ENCODE measurements at regions of chr6 and their contacts with region 1.

Region 1: GRCh38 chr6:157625764-157626163 is 197.3 kb upstream of the SNX9 start:
- DNase-seq: no peak
- H3K4me3 ChIP-seq: no peak overlapping the region
- H3K27ac ChIP-seq: no peak overlapping the region
- H3K4me1 ChIP-seq: peaks cover 0 to 6% (median 0%) of the 10 kb centered on the region in 4 experiments; a peak in 1 of 7 replicates
- H3K27me3 ChIP-seq: no peaks in the 10 kb centered on the region
- CTCF ChIP-seq: no peak
- EP300 ChIP-seq: no peak
- POLR2A ChIP-seq: no peak
- RAD21 ChIP-seq: no peak

Region 2: DNA sequence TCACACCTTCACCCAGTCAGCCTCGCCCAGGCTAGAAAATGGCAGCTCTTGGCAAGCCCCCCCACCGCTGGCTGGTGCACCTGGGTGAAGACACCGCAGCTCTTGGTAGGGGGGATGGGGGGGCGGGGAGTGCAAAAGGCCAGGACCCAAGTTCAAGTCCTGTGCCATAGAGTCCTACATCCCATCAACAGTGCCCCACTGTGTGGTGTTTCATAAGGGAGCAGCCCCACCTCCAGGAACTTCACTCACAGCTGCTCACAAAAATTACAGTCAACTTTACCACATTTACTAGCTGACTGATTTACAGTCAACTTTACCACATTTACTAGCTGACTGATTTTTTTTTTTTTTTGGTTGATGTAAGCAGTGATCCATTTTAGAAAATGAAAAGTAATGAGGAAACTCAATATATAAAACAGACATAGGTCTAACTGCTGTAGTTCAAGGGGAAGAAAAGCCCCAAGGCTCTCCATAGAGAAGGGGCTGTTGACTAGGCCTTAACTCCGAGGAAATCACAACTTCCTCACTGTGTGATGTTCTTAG is 11.7 kb before region 1 on chr6:
- CTCF ChIA-PET with region 1: interaction called, 10 read pairs
- POLR2A ChIA-PET with region 1: interaction called, 3 read pairs
- DNase-seq: no peak
- H3K4me3 ChIP-seq: no peak overlapping the region
- H3K27ac ChIP-seq: no peak overlapping the region
- H3K4me1 ChIP-seq: no peaks in the 10 kb centered on the region
- H3K27me3 ChIP-seq: no peaks in the 10 kb centered on the region
- CTCF ChIP-seq: peak in 1 of 3 experiments; percentile 19; a peak in 2 of 4 replicates
- EP300 ChIP-seq: no peak
- POLR2A ChIP-seq: no peak
- RAD21 ChIP-seq: peak; percentile 41 to 58

Measured in H1 (cell line).